Activated T-helper 1 cell treated with anti-CD3 and anti-CD28 coated beads, Interleukin-12 subunit alpha, Interleukin-12 subunit beta, Interleukin-2, Interleukin-4 antibody, amounts not matched to agents 30 ng/mL and 10 ng/mL and 1 ng/mL, durations not matched to agents 14 hours and 24 hours and 36 hours (primary cell): ENCODE measurements at regions of chr18 and their contacts with region 1.

Region 1: DNA sequence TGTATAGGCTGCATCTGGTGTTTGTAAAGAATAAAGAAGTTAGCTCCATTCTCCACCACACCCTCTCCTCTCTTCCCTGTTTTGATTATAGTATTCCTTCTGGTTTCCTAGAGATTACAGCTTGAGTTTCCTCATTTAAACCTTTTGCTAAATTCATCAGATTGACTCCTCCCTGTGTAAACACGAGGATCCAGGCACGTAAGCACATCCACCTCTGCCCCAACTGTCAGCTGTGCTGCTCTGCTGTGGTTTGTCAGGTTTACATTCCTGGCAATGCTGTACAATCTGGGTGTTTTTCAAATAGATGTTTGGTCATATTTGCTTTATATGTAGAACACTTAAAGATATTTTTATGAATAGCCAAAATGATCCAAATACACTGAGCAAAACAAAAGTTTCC is 302.8 kb downstream of the PTGR3 start:
- DNase-seq: no peak
- H3K4me3 Mint-ChIP-seq: no peak overlapping the region
- H3K27ac Mint-ChIP-seq: no peak overlapping the region
- H3K4me1 Mint-ChIP-seq: peaks cover 11% of the 10 kb centered on the region
- H3K27me3 Mint-ChIP-seq: no peaks in the 10 kb centered on the region

Region 2: DNA sequence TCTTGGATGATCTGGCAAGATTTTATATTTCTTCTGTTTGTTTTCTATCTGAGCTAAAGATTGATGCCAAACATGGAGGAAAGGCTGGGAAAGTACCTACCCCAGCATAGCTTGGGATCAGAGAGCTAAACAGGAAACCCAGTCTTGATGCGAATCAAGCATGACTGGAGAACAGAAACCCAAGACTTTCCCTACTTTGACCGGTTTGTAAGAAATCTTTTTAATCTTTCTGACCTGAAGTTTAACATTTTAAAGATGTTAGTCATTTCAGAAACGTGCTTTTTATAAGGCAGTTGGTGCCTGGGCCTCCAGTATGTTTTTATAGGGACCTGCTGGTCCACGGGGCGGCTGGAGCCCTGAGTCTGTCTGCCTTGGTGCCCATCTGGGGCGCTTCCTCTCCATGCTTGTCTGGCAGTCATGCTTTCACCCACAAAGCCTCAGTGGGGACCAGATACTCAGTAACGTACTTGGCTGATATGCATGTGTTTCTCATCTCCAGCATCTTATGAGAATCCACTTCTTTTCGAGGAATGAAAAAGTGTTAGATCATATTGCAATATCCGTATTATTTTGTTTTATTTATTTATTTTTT is 36.2 kb after region 1 on chr18:
- intact Hi-C with region 1: loop called (anchors 5 kb)
- DNase-seq: no peak
- H3K4me3 Mint-ChIP-seq: peak overlapping the region; percentile 72
- H3K27ac Mint-ChIP-seq: no peak overlapping the region
- H3K4me1 Mint-ChIP-seq: peaks cover 19% of the 10 kb centered on the region
- H3K27me3 Mint-ChIP-seq: peaks cover 3% of the 10 kb centered on the region

Region 3: GRCh38 chr18:75070625-75071483 is 164.7 kb after region 1 on chr18:
- intact Hi-C with region 1: no loop called
- DNase-seq: peak; percentile 70
- H3K4me3 Mint-ChIP-seq: peak overlapping the region; percentile 78
- H3K27ac Mint-ChIP-seq: peak overlapping the region; percentile 96
- H3K4me1 Mint-ChIP-seq: peaks cover 31% of the 10 kb centered on the region
- H3K27me3 Mint-ChIP-seq: no peaks in the 10 kb centered on the region